ENCODE measurements at regions of chr21 and their contacts with region 1.

Region 1: DNA sequence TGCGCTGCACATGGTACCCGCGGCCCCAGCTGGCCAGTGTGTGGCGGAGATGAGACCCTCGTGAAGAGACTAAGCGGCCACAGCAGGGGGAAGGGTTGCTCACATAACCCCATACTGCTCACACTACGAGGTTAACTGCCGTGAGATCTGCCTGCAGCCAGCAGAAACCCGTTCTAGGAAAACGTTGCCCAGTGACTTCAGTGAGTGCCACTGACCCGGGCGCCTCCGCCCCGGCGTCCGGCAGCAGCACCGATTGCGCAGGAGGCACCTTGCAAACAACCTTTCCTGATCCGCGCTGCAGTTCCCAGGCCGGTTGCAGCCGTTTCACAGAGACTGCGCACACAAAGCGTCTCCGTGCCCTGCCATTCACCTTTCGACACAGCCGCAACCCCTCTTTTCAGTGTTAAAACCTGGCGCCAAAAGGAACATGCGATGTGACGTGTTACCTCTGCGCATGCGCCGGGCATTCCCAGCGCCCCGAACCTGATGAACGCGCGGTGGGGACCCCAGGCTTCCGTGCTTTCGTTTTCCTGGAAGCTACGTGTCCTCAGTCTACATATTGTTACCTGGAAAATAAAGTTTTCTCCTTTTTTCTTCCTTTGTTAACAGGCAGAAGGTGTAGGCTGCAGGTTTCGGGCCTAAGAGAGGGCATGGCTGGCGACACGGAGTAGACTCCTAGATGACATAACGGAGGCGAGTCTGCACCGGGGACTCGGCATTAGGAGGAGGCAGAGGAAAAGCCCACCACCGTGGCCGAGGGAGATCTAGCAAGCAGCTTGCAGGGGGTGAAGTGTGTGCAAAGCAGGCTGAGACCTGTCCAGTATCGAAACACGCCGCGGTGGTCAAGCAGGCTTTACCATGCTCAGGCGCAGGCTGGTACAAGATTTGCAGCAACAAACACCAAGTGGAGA is 8.9 kb downstream of the VPS26C start:
- DNase-seq: peak; percentile 87
- ATAC-seq: peak; percentile 83
- H3K4me3 ChIP-seq: peak overlapping the region; percentile 73
- H3K27ac ChIP-seq: peak overlapping the region; percentile 94
- H3K4me1 ChIP-seq: 0 out of 2 replicates have a peak, but pooled peaks cover 5% of the 10 kb centered on the region
- H3K27me3 ChIP-seq: no peaks in the 10 kb centered on the region
- CTCF ChIP-seq: no peak
- EP300 ChIP-seq: no peak
- POLR2A ChIP-seq: peak; percentile 68
- RAD21 ChIP-seq: no peak

Region 2: DNA sequence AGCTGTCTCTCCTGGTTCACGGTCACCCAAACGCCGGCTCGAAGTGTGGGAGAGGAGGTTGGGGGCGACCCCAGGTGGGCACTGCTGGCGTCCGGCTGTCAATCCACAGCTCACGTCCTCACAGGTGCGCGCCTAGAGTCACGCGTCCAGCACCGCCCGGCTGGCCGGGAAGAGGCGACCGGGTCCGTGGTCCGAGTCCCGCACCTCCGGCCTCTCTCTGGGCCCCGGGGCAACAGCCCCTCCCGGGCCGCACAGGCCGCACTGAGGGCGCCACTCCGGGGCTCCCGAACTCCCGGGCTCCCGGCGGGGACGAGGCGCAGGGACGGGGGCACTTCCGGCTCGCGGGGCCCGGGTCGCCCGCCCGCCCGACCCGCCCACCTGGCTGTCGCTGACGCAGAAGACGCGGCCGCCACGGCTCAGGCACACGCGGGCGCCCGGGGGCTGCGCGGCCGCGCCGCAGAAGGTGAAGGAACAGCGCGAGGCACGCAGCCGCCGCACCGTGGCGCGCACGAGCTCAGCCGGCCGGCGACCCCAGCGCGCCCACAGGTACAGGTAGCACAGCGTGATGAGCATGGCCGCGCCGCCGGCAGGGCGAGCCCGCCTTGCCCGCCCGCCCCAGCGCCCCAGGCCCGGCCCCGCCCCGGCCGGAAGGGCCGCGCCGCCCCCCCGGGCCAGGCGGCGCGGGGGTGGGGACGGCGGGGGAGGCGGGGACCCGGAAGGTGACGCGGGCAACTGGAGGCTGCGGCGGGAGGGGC is 292.0 kb before region 1 on chr21 and contains the start of gene HLCS:
- CTCF ChIA-PET with region 1: no interaction called
- POLR2A ChIA-PET with region 1: interaction called, 5 read pairs
- RAD21 ChIA-PET with region 1: interaction called, 4 read pairs
- SMC1A ChIA-PET with region 1: no interaction called
- in situ Hi-C with region 1: no loop called
- intact Hi-C with region 1: loop called (anchors 10 kb)
- DNase-seq: no peak
- ATAC-seq: peak; percentile 84
- H3K4me3 ChIP-seq: peak within 1 kb of the TSS; percentile 88
- H3K27ac ChIP-seq: peak within 1 kb of the TSS; percentile 49
- H3K4me1 ChIP-seq: peaks cover 15% of the 10 kb centered on the region
- H3K27me3 ChIP-seq: no peaks in the 10 kb centered on the region
- CTCF ChIP-seq: peak; percentile 10 to 40 (median 26); a peak in 3 of 6 replicates
- EP300 ChIP-seq: no peak
- POLR2A ChIP-seq: peak; percentile 87
- RAD21 ChIP-seq: no peak
- polyA plus RNA-seq, gene HLCS: 1.5 to 1.8 TPM

Region 3: DNA sequence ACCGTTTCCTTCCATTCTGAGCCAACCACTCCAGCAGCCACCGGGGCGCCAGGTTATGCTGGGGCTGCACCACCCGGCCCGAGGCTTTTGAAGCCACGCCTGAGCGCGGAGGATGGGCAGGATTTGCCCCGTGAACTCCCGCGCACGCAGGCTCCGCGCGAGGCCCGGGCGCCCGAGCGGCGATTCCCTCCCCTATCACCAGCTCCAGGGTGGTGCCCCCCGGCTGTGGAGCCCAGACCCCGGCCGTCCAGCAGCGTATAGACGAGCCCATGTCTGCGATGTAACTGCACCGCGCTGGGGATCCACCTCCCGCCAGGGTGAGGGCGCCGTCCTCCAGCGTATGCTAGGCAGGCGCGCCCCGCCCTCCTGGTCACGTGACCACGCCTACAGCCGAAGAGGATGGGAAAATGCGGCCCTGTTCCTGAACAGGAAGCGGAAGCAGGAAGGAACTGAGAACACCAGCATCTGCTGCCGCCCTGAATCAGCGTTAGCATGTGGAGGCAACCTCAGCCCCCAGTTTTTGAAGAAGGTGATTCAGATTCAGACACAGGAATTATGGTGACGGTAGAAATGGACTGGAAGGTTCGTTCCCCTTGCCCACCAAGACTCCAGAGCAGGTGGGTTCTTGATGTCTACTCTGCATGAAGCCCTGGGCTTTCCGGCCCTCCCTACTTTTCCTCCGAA is 37.1 kb before region 1 on chr21:
- CTCF ChIA-PET with region 1: interaction called, 5 read pairs
- POLR2A ChIA-PET with region 1: no interaction called
- RAD21 ChIA-PET with region 1: interaction called, 4 read pairs
- SMC1A ChIA-PET with region 1: interaction called, 4 read pairs
- in situ Hi-C with region 1: no loop called
- intact Hi-C with region 1: loop called (anchors 2 kb)
- DNase-seq: peak; percentile 86
- ATAC-seq: peak; percentile 96
- H3K4me3 ChIP-seq: peak overlapping the region; percentile 91
- H3K27ac ChIP-seq: peak overlapping the region; percentile 73
- H3K4me1 ChIP-seq: peaks cover 9% of the 10 kb centered on the region
- H3K27me3 ChIP-seq: no peaks in the 10 kb centered on the region
- CTCF ChIP-seq: peak; percentile 54 to 84 (median 62)
- EP300 ChIP-seq: no peak
- POLR2A ChIP-seq: peak; percentile 92
- RAD21 ChIP-seq: peak; percentile 77

Region 4: DNA sequence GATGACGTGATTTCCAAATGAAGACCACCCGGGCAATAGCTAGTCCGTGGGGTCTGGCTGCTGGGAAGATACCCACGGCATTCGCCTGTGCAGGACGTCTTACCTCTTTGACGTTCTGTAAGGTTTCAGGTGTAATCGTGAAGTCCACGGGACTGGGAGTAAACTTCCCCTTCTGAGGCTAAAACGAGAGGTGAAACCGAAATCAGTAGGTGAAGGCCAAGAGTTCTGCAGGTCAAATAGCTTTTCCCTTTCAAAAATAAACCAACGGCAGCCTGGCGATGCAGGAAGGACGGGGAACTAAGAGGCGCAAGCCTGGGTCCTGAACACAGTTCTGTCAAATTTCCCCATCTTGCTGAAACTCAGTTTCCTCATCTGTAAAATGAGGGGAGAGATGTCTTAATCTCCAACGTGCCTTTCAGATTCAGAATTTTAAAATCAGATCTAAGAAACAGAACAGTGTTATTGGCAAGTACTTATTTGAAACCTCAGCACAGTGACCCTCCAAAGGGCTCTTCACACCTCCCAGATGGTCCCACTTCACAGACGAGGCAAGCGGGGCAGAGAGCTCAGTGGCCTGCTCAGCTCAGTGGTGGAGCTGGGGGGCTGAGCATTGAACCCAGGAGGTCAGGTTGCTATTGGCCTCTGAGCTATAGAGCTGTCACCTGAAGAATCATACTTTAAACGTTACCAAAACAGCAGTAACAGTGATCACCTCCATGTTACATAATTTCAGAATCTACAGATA is 25.8 kb before region 1 on chr21:
- CTCF ChIA-PET with region 1: interaction called, 5 read pairs
- POLR2A ChIA-PET with region 1: interaction called, 12 read pairs
- RAD21 ChIA-PET with region 1: interaction called, 8 read pairs
- SMC1A ChIA-PET with region 1: interaction called, 34 read pairs
- in situ Hi-C with region 1: no loop called
- intact Hi-C with region 1: no loop called
- DNase-seq: no peak
- ATAC-seq: peak; percentile 96
- H3K4me3 ChIP-seq: peak overlapping the region; percentile 39; the same call in 1 of the 2 replicates
- H3K27ac ChIP-seq: peak overlapping the region; percentile 87
- H3K4me1 ChIP-seq: peaks cover 19% of the 10 kb centered on the region
- H3K27me3 ChIP-seq: no peaks in the 10 kb centered on the region
- CTCF ChIP-seq: no peak
- EP300 ChIP-seq: peak; percentile 32 to 68; a peak in 1 of 4 replicates
- POLR2A ChIP-seq: no peak
- RAD21 ChIP-seq: no peak

Region 5: DNA sequence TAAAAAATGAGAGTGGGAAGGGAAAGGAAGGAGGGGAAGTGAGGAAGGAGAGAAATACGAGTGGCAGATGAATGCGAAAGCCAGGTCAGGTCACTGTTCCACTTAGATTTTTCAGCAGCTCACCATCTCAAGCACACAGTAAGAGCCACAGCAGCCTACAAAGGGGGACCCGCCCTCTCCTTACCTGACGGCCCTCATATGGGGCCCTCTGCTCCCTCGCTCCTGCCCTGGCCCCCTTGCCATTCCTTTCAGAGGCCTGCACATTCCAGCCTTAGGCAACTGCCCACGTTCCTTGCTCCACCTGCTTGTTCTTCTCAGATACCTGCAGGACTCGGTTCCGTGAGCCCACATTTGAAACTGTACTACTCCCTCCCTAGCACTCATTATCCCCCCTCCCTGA is 13.1 kb before region 1 on chr21:
- CTCF ChIA-PET with region 1: interaction called, 7 read pairs
- POLR2A ChIA-PET with region 1: interaction called, 3 read pairs
- RAD21 ChIA-PET with region 1: interaction called, 3 read pairs
- SMC1A ChIA-PET with region 1: interaction called, 18 read pairs
- in situ Hi-C with region 1: no loop called
- intact Hi-C with region 1: no loop called
- DNase-seq: no peak
- ATAC-seq: no peak
- H3K4me3 ChIP-seq: no peak overlapping the region
- H3K27ac ChIP-seq: no peak overlapping the region
- H3K4me1 ChIP-seq: peaks cover 7% of the 10 kb centered on the region
- H3K27me3 ChIP-seq: no peaks in the 10 kb centered on the region
- CTCF ChIP-seq: no peak
- EP300 ChIP-seq: no peak
- POLR2A ChIP-seq: no peak
- RAD21 ChIP-seq: no peak

Region 6: GRCh38 chr21:37734846-37735245 is 476.6 kb after region 1 on chr21:
- CTCF ChIA-PET with region 1: no interaction called
- POLR2A ChIA-PET with region 1: no interaction called
- RAD21 ChIA-PET with region 1: no interaction called
- SMC1A ChIA-PET with region 1: no interaction called
- in situ Hi-C with region 1: no loop called
- intact Hi-C with region 1: no loop called
- DNase-seq: no peak
- ATAC-seq: no peak
- H3K4me3 ChIP-seq: no peak overlapping the region
- H3K27ac ChIP-seq: no peak overlapping the region
- H3K4me1 ChIP-seq: no peaks in the 10 kb centered on the region
- H3K27me3 ChIP-seq: no peaks in the 10 kb centered on the region
- CTCF ChIP-seq: no peak
- EP300 ChIP-seq: no peak
- POLR2A ChIP-seq: no peak
- RAD21 ChIP-seq: no peak

Region 7: GRCh38 chr21:38269576-38269936 is 1011.3 kb after region 1 on chr21:
- CTCF ChIA-PET with region 1: no interaction called
- POLR2A ChIA-PET with region 1: no interaction called
- RAD21 ChIA-PET with region 1: no interaction called
- SMC1A ChIA-PET with region 1: no interaction called
- in situ Hi-C with region 1: loop called (anchors 10 kb)
- intact Hi-C with region 1: no loop called
- DNase-seq: peak; percentile 87
- ATAC-seq: peak; percentile 94
- H3K4me3 ChIP-seq: peak overlapping the region; percentile 32; the same call in 1 of the 2 replicates
- H3K27ac ChIP-seq: peak overlapping the region; percentile 96
- H3K4me1 ChIP-seq: peaks cover 40% of the 10 kb centered on the region
- H3K27me3 ChIP-seq: no peaks in the 10 kb centered on the region
- CTCF ChIP-seq: no peak
- EP300 ChIP-seq: peak; percentile 76 to 79; a peak in 2 of 4 replicates
- POLR2A ChIP-seq: no peak
- RAD21 ChIP-seq: no peak

Measured in GM12878 (cell line).